HAP-1 (cell line): ENCODE measurements at regions of chr17 and their contacts with region 1.

Region 1: DNA sequence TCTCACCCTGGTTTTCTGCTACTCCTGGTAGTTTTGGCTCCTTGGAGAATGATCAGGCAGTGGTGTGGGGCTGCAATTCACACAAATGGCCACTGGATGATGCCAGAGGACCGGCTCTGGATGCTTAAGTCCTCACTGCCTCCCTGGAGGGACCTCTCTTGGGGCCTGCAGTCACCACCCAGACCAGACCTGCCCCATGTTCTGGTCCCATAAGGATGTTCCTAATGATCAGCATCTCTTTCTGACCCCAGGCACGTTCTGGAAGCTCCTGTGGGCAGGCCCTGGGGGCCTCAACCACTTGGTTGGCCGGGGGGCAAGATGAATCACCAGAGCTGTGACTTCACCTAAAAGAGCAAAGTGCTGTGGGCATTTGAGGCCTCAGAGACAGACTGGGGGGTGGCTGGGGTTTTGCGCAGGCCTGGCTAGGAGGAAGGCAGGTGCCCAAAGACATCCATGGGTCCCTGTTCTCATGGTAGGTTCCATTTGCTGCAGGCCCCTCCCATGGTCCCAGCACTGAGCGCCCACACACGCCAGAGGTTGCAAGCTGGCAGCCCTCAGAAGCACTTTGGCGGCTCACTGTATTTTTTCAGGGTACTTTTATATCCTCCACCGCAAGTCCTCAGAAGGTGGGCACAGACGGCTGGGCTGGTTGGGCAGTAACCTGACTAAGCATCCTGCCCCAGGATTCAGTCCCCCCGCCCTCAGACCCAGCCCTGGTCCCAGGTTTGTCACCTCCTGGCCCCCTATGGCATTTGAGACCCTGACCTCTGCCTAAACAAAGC is 53.2 kb downstream of the NT5M start:
- DNase-seq: peak; percentile 66 to 86
- H3K4me3 ChIP-seq: no peak overlapping the region
- H3K4me1 ChIP-seq: no peaks in the 10 kb centered on the region; the same call in 1 of the 2 replicates
- H3K27me3 ChIP-seq: no peaks in the 10 kb centered on the region; the same call in 1 of the 2 replicates

Region 2: DNA sequence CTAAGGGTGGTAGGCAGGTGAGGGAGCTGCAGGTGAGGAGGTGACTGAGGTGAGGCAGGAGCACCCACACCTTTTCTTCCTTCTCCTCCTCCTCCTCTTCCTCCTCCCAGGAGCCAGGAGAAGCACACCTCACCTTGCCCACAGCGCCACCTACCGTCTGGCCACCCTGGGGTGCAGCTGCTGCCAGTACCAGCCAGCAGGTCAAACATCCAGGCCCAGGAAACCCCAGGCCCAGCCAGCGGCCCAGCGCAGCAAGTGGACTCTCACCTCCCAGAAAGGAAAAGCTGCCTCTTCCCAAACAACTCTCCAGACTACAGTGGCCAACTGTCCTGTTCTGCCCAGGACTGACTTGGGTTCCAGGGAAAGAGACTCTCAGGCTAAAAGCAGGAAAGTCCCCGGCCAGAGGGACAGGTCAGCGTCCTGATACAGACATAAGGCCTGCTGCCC is 212.4 kb after region 1 on chr17:
- in situ Hi-C with region 1: loop called (anchors 10 kb)
- DNase-seq: peak; percentile 35 to 91
- H3K4me3 ChIP-seq: no peak overlapping the region
- H3K4me1 ChIP-seq: no peaks in the 10 kb centered on the region
- H3K27me3 ChIP-seq: no peaks in the 10 kb centered on the region

Region 3: GRCh38 chr17:17641621-17642409 is 285.5 kb after region 1 on chr17:
- in situ Hi-C with region 1: loop called (anchors 5 kb)
- DNase-seq: peak; percentile 84 to 86
- H3K4me3 ChIP-seq: no peak overlapping the region
- H3K4me1 ChIP-seq: peaks cover 6% of the 10 kb centered on the region
- H3K27me3 ChIP-seq: no peaks in the 10 kb centered on the region